ENCODE measurements at regions of chr5 and their contacts with region 1.

Region 1: GRCh38 chr5:75053304-75054133 is 1.2 kb upstream of the GCNT4 start:
- DNase-seq: peak; percentile 71
- H3K4me3 Mint-ChIP-seq: peak overlapping the region; percentile 81
- H3K27ac Mint-ChIP-seq: peak overlapping the region; percentile 84
- H3K4me1 Mint-ChIP-seq: peaks cover 80% of the 10 kb centered on the region
- H3K27me3 Mint-ChIP-seq: peaks cover 4% of the 10 kb centered on the region

Region 2: GRCh38 chr5:74865804-74866595 is 187.5 kb before region 1 on chr5 and contains the start of gene FAM169A:
- CTCF ChIA-PET with region 1: no interaction called
- POLR2A ChIA-PET with region 1: no interaction called
- intact Hi-C with region 1: loop called (anchors 10 kb)
- DNase-seq: peak; percentile 56
- H3K4me3 Mint-ChIP-seq: peak within 1 kb of the TSS; percentile 84
- H3K27ac Mint-ChIP-seq: peak within 1 kb of the TSS; percentile 76
- H3K4me1 Mint-ChIP-seq: peaks cover 23% of the 10 kb centered on the region
- H3K27me3 Mint-ChIP-seq: peaks cover 3% of the 10 kb centered on the region
- total RNA-seq, gene FAM169A: 9.0 to 10.4 TPM

Region 3: DNA sequence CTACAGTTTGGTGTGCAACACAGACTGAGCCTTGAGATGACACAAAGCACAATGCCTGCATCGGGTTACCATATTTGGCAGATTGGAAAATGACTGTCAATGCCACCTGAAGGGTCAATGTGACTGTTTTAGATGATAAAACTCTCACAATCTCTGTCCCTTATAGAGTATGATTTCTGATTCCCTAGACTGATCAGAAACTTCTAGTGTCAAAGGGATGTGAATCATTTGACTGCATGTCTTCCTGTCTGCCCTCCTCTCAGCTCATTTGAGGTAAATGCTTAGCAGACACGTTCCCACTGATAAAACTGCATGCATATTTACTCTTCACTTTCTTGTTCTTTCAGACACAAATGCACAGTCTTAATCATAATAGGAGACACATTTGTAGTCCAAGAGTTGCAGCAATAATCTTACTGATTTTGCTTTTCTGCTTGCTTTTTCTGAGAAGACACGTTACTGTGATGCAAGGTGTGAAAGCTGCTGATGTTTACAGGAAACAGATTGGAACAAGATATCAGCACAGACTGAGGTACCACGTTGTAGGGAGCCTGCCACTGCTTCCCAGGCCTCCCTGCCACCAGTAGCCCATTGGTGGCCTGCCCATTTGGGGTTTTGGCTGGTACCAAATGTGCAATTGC is 78.9 kb before region 1 on chr5:
- CTCF ChIA-PET with region 1: interaction called, 3 read pairs
- POLR2A ChIA-PET with region 1: no interaction called
- intact Hi-C with region 1: loop called (anchors 2 kb)
- DNase-seq: peak; percentile 53
- H3K4me3 Mint-ChIP-seq: peak overlapping the region; percentile 7
- H3K27ac Mint-ChIP-seq: peak overlapping the region; percentile 82
- H3K4me1 Mint-ChIP-seq: peaks cover 27% of the 10 kb centered on the region
- H3K27me3 Mint-ChIP-seq: peaks cover 1% of the 10 kb centered on the region

Region 4: DNA sequence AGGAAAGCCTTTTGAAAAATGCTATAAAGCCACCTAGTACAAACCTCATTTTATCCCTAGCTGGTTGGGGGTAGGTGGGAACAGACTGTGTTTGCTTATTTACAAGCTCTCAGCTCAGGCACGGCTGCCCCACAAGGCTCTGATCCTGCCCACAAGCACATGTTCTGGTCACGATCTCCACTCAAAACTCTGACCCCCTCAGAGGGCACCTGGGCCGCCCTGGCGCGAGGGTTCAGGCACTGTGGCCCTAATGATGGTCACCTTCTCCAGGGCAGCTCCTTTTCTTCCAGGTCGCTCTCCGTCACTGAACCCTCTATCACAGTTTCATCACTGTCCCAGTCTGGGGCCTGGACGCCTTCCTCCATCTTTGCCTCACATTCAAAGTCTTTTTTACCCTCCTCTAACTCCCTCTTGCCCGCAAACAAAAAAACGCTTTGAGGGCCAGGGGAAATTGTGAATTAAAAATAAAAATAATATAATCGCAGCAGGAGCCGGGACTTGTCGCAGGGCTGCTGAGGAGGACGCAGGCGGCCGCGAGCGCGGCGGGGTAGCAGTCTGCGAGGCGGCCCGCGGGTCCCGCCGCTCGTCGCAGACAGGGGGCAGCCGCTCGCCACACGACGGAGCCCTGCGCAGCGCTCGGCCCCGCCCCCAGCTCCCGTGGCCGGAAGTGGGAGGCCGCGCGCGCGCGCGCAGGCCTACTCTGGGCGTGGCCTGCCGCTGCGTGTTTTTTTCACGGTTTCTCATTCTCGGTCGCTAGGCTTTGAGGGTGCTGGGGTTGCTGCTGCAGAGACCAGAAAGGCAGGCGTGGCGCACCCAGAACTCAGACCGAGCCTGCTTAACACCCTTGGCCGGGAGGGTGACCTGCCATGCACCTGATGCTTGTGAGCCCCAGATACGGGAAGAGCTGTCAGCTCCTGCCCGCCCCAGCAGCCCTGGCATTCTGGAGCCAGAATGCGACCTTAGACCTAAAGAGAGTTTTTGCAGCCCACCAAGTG is 183.1 kb after region 1 on chr5 and contains the start of gene ANKRD31:
- CTCF ChIA-PET with region 1: interaction called, 40 read pairs
- POLR2A ChIA-PET with region 1: interaction called, 16 read pairs
- intact Hi-C with region 1: loop called (anchors 2 kb)
- DNase-seq: peak; percentile 90
- H3K4me3 Mint-ChIP-seq: peak within 1 kb of the TSS; percentile 96
- H3K27ac Mint-ChIP-seq: peak within 1 kb of the TSS; percentile 94
- H3K4me1 Mint-ChIP-seq: peaks cover 15% of the 10 kb centered on the region
- H3K27me3 Mint-ChIP-seq: no peaks in the 10 kb centered on the region
- total RNA-seq, gene ANKRD31: 0.29 to 0.33 TPM

Region 5: GRCh38 chr5:75320341-75320740 is 266.8 kb after region 1 on chr5:
- CTCF ChIA-PET with region 1: no interaction called
- POLR2A ChIA-PET with region 1: no interaction called
- intact Hi-C with region 1: no loop called
- DNase-seq: no peak
- H3K4me3 Mint-ChIP-seq: no peak overlapping the region
- H3K27ac Mint-ChIP-seq: no peak overlapping the region
- H3K4me1 Mint-ChIP-seq: peaks cover 21% of the 10 kb centered on the region
- H3K27me3 Mint-ChIP-seq: no peaks in the 10 kb centered on the region

Region 6: GRCh38 chr5:75336625-75337339 is 283.3 kb after region 1 on chr5 and contains the start of gene HMGCR:
- CTCF ChIA-PET with region 1: interaction called, 10 read pairs
- POLR2A ChIA-PET with region 1: interaction called, 10 read pairs
- intact Hi-C with region 1: loop called (anchors 1 kb)
- DNase-seq: peak; percentile 99
- H3K4me3 Mint-ChIP-seq: no peak within 1 kb of the TSS
- H3K27ac Mint-ChIP-seq: no peak within 1 kb of the TSS
- H3K4me1 Mint-ChIP-seq: peaks cover 35% of the 10 kb centered on the region
- H3K27me3 Mint-ChIP-seq: no peaks in the 10 kb centered on the region
- total RNA-seq, gene HMGCR: 57.7 to 68.6 TPM

Region 7: GRCh38 chr5:75566710-75567309 is 513.3 kb after region 1 on chr5:
- CTCF ChIA-PET with region 1: no interaction called
- POLR2A ChIA-PET with region 1: no interaction called
- intact Hi-C with region 1: loop called (anchors 5 kb)
- DNase-seq: peak; percentile 78
- H3K4me3 Mint-ChIP-seq: peak overlapping the region; percentile 57
- H3K27ac Mint-ChIP-seq: peak overlapping the region; percentile 96
- H3K4me1 Mint-ChIP-seq: peaks cover 69% of the 10 kb centered on the region
- H3K27me3 Mint-ChIP-seq: no peaks in the 10 kb centered on the region

Region 8: DNA sequence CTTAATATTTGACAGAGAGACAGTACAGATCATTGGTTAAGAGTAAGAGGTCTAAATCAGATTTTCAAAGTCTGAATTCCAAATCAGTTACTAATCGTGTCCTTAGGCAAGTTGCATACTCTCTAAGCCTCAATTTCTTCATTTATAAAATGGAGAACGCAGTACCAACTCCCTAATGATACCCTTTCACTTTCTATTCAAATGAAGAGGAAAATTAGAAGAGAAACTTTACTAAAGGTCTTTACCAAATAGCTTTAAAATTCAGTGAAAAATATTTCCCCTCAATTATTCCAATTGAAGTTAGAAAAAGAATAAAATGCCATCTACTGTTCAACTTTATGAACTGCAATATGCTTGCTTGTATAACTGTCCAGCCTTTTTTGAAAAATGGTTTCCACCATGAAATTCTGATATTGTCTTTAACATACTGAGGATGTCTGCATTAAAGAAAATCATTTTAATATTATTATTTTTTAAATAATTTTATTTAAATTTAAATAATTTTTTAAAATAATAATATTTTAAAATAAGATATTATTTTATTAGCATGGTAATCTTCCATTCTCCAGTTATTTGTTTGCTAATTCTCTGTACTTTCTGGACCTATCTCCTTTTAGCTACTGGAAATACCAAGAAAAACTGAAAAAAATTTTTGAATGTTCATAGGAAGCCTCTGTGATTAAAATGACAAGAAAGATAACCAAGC is 627.8 kb after region 1 on chr5:
- CTCF ChIA-PET with region 1: interaction called, 5 read pairs
- POLR2A ChIA-PET with region 1: no interaction called
- intact Hi-C with region 1: loop called (anchors 1 kb)
- DNase-seq: no peak
- H3K4me3 Mint-ChIP-seq: no peak overlapping the region
- H3K27ac Mint-ChIP-seq: no peak overlapping the region
- H3K4me1 Mint-ChIP-seq: peaks cover 14% of the 10 kb centered on the region
- H3K27me3 Mint-ChIP-seq: no peaks in the 10 kb centered on the region